Heart right ventricle (tissue), 16 donors: ENCODE measurements at regions of chr2 and their contacts with region 1.

Region 1: DNA sequence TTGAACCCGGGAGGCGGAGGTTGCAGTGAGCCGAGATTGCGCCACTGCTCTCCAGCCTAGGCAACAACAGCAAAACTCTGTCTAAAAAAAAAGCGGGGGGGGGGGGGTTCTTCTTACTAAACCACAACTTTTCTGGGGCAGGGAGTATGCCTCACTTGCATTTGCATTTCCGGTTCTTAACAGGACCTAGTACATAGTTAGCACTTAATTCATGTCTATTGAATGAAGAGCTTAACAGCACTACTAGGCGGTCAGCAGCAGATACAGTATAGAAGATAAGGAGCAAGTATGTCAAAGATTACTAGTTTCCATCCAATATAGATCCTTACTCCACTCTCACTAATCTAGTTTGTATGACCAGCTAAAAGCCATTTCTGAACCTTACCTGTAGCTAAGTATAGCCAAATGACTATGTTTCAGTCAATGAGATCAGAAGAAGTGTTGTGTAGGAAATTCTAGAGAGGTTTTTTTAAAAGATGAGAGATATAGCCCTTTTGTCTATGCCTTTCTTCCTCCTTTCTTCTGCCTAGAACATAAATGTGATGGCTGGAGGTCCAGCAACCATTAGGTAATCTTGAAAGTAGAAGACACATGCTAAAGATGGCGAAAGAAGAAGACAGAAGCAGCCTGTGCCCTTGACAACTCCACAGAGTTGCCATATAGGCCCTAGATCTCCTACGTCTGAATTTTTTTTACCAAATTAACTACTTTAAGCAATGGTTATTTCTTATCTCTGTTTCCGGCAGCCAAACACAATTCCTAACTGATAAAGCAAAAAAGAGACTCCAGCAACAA is 11.3 kb downstream of the HYCC2 start:
- DNase-seq: no peak
- ATAC-seq: no peak
- H3K4me3 ChIP-seq: no peak overlapping the region
- H3K27ac ChIP-seq: no peak overlapping the region
- H3K4me1 ChIP-seq: peaks cover 0 to 39% (median 29%) of the 10 kb centered on the region in 9 donors
- H3K27me3 ChIP-seq: no peaks in the 10 kb centered on the region
- CTCF ChIP-seq: no peak

Region 2: GRCh38 chr2:200901459-200902072 is 158.6 kb before region 1 on chr2:
- intact Hi-C with region 1: loop called in 8 of 10 experiments (anchors 5 kb)
- DNase-seq: peak in 1 of 2 donors; percentile 66
- ATAC-seq: peak; percentile 77 to 88 (median 82)
- H3K4me3 ChIP-seq: no peak overlapping the region
- H3K27ac ChIP-seq: peak overlapping the region in 3 of 10 donors; percentile 6 to 51 (median 19)
- H3K4me1 ChIP-seq: peaks cover 0 to 18% (median 5%) of the 10 kb centered on the region in 9 donors
- H3K27me3 ChIP-seq: no peaks in the 10 kb centered on the region
- CTCF ChIP-seq: peak; percentile 51 to 86 (median 76)

Region 3: GRCh38 chr2:200913654-200914053 is 146.5 kb before region 1 on chr2:
- intact Hi-C with region 1: loop called in 3 of 10 experiments (anchors 5 to 10 kb)
- DNase-seq: no peak
- ATAC-seq: no peak
- H3K4me3 ChIP-seq: no peak overlapping the region
- H3K27ac ChIP-seq: no peak overlapping the region
- H3K4me1 ChIP-seq: no peaks in the 10 kb centered on the region
- H3K27me3 ChIP-seq: no peaks in the 10 kb centered on the region
- CTCF ChIP-seq: no peak

Region 4: GRCh38 chr2:200963124-200963917 is 96.8 kb before region 1 on chr2 and contains the start of gene ORC2:
- intact Hi-C with region 1: loop called in 3 of 10 experiments (anchors 5 kb)
- DNase-seq: peak; percentile 95
- ATAC-seq: peak; percentile 99 to 100 (median 99)
- H3K4me3 ChIP-seq: peak within 1 kb of the TSS; percentile 62 to 96 (median 89)
- H3K27ac ChIP-seq: peak within 1 kb of the TSS; percentile 80 to 93 (median 91)
- H3K4me1 ChIP-seq: peaks cover 0 to 53% (median 41%) of the 10 kb centered on the region in 9 donors
- H3K27me3 ChIP-seq: no peaks in the 10 kb centered on the region
- CTCF ChIP-seq: peak; percentile 0 to 69 (median 54)
- total RNA-seq, gene ORC2: 18.6 to 38.8 (median 27.5) TPM